ENCODE measurements at regions of chr1 and their contacts with region 1.

Region 1: GRCh38 chr1:182084487-182085316 is 23.2 kb upstream of the ZNF648 start:
- DNase-seq: no peak
- ATAC-seq: peak; percentile 93
- H3K4me3 ChIP-seq: no peak overlapping the region
- H3K27ac ChIP-seq: no peak overlapping the region
- H3K4me1 ChIP-seq: no peaks in the 10 kb centered on the region
- H3K27me3 ChIP-seq: no peaks in the 10 kb centered on the region
- CTCF ChIP-seq: peak; percentile 84

Region 2: GRCh38 chr1:181479137-181479745 is 605.5 kb before region 1 on chr1:
- CTCF ChIA-PET with region 1: interaction called, 6 read pairs
- POLR2A ChIA-PET with region 1: no interaction called
- in situ Hi-C with region 1: no loop called
- intact Hi-C with region 1: loop called (anchors 1 kb)
- DNase-seq: peak; percentile 32
- ATAC-seq: peak; percentile 89
- H3K4me3 ChIP-seq: no peak overlapping the region
- H3K27ac ChIP-seq: no peak overlapping the region
- H3K4me1 ChIP-seq: peaks cover 4% of the 10 kb centered on the region
- H3K27me3 ChIP-seq: peaks cover 24% of the 10 kb centered on the region
- CTCF ChIP-seq: peak; percentile 84

Region 3: DNA sequence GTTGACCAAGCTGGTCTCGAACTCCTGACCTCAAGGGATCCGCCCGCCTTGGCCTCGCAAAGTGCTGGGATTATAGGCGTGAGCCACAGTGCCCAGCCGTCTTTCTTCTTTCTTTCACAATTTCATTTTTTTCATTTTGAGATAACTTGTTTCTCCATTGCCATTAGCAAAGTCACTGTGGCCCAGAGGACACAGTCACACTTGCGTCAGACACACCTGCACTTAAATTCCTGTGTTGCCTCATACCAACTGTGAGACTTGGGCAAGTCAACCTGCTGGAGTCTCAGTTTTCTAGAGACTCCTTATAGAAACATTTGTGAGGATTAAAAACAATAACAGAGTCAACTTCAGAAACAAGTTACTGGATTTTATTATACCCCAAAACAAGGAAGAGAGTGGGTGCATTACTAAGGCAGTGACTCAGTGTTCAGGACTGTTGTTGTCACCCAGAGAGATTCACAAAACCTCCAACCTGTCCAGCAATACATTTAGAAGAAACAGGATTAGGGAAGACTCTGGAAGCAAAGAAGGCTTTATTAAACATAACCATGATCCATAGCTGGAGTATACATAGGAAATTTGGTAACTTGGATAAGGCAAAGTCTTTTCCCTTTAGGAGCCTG is 313.2 kb after region 1 on chr1:
- CTCF ChIA-PET with region 1: interaction called, 7 read pairs
- POLR2A ChIA-PET with region 1: no interaction called
- in situ Hi-C with region 1: no loop called
- intact Hi-C with region 1: loop called (anchors 1 kb)
- DNase-seq: no peak
- ATAC-seq: no peak
- H3K4me3 ChIP-seq: no peak overlapping the region
- H3K27ac ChIP-seq: no peak overlapping the region
- H3K4me1 ChIP-seq: no peaks in the 10 kb centered on the region
- H3K27me3 ChIP-seq: peaks cover 7% of the 10 kb centered on the region
- CTCF ChIP-seq: no peak

Region 4: DNA sequence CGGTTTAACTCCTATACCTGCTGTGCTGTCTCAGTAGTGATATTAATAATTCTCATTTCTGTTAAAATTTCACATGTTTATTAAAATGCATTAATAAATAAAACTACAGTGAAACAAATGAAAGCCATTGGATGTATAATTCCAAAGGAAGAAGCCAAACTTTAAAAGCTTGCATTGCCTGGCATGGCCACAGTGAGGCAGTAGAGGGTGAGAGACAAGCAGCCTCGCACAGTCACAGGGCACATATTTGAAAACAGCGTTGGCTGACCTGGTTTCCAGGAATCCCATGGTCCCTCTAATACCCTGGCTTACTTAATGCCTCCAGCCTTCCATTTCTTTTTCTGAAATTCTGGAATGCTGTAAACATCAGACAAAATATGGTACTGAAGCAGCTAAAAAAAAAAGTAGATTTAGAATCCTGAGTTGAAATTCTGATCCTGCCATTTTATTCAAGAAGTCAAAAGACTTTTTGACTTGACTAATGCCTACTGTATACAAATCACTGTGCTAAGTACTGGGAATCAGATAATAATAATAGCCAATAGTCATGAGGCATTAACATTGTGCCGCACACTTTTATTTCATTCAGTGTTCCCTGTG is 511.0 kb after region 1 on chr1:
- CTCF ChIA-PET with region 1: interaction called, 3 read pairs
- POLR2A ChIA-PET with region 1: no interaction called
- in situ Hi-C with region 1: no loop called
- intact Hi-C with region 1: loop called (anchors 10 kb)
- DNase-seq: peak; percentile 41
- ATAC-seq: peak; percentile 64; the same call in 1 of the 2 replicates
- H3K4me3 ChIP-seq: no peak overlapping the region
- H3K27ac ChIP-seq: no peak overlapping the region
- H3K4me1 ChIP-seq: no peaks in the 10 kb centered on the region
- H3K27me3 ChIP-seq: peaks cover 7% of the 10 kb centered on the region
- CTCF ChIP-seq: peak; percentile 91

Region 5: GRCh38 chr1:182789138-182790076 is 704.7 kb after region 1 on chr1 and contains the start of gene NPL:
- CTCF ChIA-PET with region 1: no interaction called
- POLR2A ChIA-PET with region 1: no interaction called
- in situ Hi-C with region 1: no loop called
- intact Hi-C with region 1: loop called (anchors 5 kb)
- DNase-seq: no peak
- ATAC-seq: peak; percentile 97
- H3K4me3 ChIP-seq: peak within 1 kb of the TSS; percentile 50 to 62
- H3K27ac ChIP-seq: no peak within 1 kb of the TSS
- H3K4me1 ChIP-seq: 0 out of 2 replicates have a peak, but pooled peaks cover 3% of the 10 kb centered on the region
- H3K27me3 ChIP-seq: peaks cover 33% of the 10 kb centered on the region
- CTCF ChIP-seq: no peak
- total RNA-seq, gene NPL: 0.90 TPM